Left colon (tissue), 2 donors: ENCODE measurements at regions of chr1 and their contacts with region 1.

Region 1: DNA sequence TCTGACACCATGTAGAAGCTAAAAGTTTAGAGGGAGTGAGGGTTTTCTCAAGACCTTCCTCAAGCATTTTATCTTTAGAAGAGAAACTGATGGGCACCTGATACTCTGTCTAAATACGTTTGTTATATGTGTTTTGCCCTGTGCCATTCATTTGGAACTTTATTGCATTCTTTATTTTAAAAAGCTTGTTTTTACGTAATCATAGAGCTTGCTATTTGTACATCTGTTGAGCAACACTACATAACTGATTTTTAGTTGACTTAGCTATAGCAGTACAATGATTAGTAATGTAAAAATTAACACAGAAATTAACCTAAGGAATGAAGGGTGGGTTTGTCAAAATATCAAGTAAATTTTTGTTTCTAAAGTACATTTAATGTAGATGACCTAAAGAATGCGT is 88.5 kb downstream of the RUNX3 start:
- DNase-seq: no peak
- ATAC-seq: no peak

Region 2: DNA sequence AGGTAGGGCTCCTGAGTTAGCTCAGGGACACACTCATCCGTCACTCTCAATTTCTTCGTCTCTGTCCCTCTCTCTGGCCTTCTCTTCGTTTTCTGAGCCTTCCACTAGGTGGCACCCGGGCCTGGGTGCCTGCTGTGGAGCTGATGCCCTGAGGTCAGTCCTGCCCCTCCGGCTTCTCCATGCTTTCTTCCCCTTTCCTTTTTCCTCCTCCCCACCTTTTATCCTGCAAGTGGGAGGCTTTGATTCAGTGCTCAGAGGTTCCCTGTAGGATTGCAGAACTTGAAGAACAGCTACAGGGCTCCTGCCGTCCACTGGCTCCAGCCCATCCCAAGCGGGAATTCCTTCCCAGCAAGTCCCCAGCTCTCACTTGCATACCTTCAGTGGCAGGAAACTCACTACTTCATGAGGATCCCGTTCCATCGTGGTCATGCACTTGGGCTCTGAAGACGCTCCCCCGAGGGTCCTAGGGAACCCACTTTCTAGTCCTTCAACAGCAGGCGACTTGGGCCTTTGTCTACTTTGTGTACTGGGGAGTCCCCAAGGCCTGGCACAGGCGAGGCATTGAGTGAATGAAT is 152.9 kb before region 1 on chr1:
- intact Hi-C with region 1: loop called (anchors 2 to 10 kb)
- DNase-seq: peak; percentile 65 to 76
- ATAC-seq: peak; percentile 98